Colonic mucosa (tissue), 4 donors: ENCODE measurements at regions of chr6 and their contacts with region 1.

Region 1: DNA sequence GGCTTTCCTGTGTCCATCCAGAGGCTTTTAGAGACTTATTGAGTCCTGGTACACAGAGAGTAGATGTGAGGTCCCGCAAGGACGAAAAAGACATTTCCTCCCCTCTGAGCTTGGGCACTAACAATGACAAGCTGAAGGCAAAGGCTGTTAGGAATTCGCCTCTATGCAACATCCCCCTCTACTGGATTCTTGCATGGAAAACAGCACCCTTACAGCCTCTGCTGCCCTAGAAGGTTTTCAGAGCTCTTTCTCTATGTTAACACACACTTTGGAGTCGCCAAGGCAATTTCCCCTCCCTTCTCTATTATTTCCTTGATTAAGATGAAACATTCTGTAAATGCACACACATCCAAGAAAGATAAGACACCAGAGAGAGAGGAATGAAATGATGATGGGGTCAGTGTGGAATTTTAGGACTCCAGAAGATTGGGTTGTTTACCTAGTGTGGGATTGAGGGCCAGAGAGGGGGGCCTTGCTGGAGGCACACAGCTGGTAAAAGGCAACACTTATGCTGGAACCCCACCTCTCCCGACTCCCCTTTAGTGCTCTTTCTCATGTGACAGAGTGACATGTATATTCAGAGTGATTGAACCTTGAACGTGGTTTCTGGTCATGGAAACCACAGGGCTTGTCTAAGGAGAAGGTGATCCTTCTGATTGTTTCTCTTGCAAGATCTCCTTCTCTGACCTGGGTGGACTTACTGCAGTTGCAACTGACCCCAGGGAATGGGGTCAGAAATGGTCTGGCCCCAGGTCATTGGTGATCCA is 300.7 kb downstream of the CLIC5 start:
- DNase-seq: peak; percentile 63
- H3K4me3 ChIP-seq: no peak overlapping the region
- H3K27ac ChIP-seq: no peak overlapping the region
- H3K4me1 ChIP-seq: no peaks in the 10 kb centered on the region
- H3K27me3 ChIP-seq: no peaks in the 10 kb centered on the region
- CTCF ChIP-seq: peak; percentile 73

Region 2: DNA sequence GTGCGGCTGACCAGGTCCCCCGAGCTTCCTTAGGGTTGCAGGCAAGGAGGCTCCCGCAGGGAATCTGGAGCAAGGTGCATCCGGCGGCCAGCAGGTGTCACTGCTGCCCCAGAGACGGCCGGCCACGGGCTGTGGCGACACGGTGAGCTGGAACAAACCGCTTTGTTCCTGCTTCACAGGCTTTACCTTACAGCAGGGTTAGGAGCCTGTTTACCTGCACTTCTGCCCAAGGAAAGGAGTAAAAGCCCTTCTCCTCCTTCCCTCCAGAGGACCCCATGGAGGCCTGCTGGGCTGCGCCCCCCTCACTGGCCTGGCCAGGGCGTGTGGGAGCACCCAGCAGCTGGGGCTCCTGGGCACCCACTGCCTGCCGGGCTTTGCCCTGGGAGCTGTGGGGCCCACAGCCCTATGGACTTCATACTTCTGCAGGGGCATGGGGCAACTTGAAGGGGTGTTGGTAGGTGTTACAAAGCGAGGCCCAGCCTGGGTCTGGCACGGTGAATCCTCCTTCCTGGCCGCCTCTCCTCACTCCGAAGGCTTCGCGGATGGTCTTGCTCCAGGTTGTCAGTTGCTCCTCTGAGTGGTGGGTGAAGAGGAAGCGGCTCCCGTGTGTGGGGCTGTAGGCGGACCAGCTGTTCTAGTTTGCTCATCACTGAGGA is 1239.0 kb before region 1 on chr6:
- intact Hi-C with region 1: loop called (anchors 10 kb)
- DNase-seq: peak; percentile 82
- H3K4me3 ChIP-seq: no peak overlapping the region
- H3K27ac ChIP-seq: no peak overlapping the region
- H3K4me1 ChIP-seq: no peaks in the 10 kb centered on the region
- H3K27me3 ChIP-seq: no peaks in the 10 kb centered on the region
- CTCF ChIP-seq: peak; percentile 89

Region 3: DNA sequence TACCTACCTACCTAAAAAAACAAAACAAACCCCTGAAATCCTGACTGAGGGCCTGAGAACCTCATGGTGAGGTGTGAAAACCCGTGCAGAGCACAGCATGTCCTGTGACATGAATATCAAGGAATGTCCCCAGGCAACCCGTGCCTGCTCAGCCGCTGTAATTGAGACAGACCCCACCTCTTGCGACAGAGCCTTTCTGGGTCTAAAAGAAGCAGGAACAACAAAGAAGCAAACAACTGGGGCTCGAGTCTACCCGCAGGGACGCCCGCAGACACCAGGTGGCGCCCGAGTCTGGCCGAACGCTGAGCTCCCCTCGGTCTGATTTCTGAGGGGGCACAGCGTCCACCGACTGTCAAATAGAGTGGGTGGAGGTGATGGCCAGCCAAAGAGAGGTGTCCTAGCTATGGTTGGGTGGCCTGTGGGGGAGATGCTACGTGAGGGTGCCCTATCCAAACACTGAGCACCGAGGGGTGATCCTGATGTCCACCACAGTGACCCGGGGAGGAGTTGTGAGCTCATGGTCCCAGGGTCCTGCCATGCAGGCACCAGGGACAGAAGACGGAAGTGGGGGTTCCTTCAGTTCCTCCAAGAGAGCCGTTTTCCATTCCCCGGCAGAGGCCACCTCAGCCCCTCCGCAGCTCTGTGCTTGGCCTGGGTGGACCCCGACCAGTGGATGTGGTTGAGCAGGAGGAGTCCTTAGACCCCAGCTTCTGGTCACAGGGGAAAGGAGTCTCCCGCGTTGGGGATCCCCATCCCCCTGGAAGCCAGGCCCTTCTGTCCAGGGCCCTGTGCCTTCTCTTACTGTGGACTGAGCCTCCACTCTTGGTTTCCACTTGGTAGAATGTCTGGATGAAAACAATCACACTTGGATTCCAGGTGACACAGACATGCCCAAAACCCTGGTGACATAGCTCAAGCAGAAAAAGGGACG is 1059.2 kb before region 1 on chr6:
- intact Hi-C with region 1: loop called (anchors 5 kb)
- DNase-seq: peak; percentile 69
- H3K4me3 ChIP-seq: no peak overlapping the region
- H3K27ac ChIP-seq: no peak overlapping the region
- H3K4me1 ChIP-seq: no peaks in the 10 kb centered on the region
- H3K27me3 ChIP-seq: no peaks in the 10 kb centered on the region
- CTCF ChIP-seq: peak; percentile 97

Region 4: GRCh38 chr6:45265246-45265645 is 449.7 kb before region 1 on chr6:
- intact Hi-C with region 1: no loop called
- DNase-seq: no peak
- H3K4me3 ChIP-seq: no peak overlapping the region
- H3K27ac ChIP-seq: no peak overlapping the region
- H3K4me1 ChIP-seq: no peaks in the 10 kb centered on the region
- H3K27me3 ChIP-seq: no peaks in the 10 kb centered on the region
- CTCF ChIP-seq: no peak

Region 5: GRCh38 chr6:45419571-45420082 is 295.3 kb before region 1 on chr6:
- intact Hi-C with region 1: loop called (anchors 5 kb)
- DNase-seq: peak; percentile 53
- H3K4me3 ChIP-seq: peak overlapping the region; percentile 16
- H3K27ac ChIP-seq: no peak overlapping the region
- H3K4me1 ChIP-seq: peaks cover 5% of the 10 kb centered on the region
- H3K27me3 ChIP-seq: peaks cover 42% of the 10 kb centered on the region
- CTCF ChIP-seq: peak; percentile 24

Region 6: DNA sequence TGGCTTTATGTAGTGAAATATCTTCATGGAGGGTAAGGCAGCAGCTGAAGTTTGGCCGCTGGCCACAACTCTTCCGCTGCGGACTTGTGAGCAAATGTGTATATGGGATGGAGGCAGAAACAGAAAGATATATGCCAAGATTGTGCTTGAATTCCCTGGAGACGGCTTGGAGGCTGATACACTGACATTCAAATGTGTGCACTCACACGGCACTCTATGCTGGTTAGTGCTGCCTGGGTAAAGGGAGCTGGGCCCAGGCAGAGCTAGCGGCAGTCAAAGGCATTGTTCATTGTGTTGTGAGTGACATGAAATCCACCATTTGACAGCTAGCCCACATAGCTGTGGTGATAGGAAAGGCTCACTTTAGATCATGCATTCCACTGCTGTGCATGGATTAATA is 98.0 kb after region 1 on chr6:
- intact Hi-C with region 1: no loop called
- DNase-seq: no peak
- H3K4me3 ChIP-seq: no peak overlapping the region
- H3K27ac ChIP-seq: no peak overlapping the region
- H3K4me1 ChIP-seq: no peaks in the 10 kb centered on the region
- H3K27me3 ChIP-seq: no peaks in the 10 kb centered on the region
- CTCF ChIP-seq: no peak

Region 7: DNA sequence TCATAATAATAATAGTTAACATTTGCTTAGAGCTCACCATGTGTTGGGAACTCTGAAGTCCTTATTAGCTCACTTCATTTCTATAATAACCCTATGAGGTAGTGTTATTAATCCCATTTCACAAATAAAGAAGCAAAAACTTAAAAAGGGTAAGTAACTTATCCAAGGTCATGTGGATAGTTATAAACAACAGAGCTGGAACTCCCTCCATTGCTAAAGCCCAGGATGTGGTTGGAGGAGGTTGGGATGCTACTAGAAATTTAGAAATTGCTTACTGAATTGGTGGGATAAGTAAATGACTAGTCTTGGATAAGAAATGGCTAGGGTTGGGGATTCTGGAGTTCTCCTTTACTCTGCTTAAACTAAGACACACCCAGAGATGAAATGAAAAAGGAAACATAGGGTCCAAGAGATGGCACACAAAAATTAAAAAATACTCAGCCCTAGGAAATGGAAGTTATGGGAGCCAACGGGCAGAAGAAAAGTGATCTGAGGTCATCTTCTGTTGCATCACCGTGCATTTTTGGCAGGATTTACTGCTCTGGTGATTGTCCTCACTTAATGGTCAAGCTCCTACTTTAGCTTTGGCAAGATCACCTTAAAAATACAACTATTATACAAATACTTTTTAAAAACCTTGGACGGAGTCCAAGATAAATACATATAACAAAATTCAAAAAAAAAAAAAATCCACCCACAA is 308.4 kb after region 1 on chr6:
- intact Hi-C with region 1: no loop called
- DNase-seq: no peak
- H3K4me3 ChIP-seq: no peak overlapping the region
- H3K27ac ChIP-seq: no peak overlapping the region
- H3K4me1 ChIP-seq: no peaks in the 10 kb centered on the region
- H3K27me3 ChIP-seq: no peaks in the 10 kb centered on the region
- CTCF ChIP-seq: no peak